Sigmoid colon (tissue), 7 donors: ENCODE measurements at regions of chr6 and their contacts with region 1.

Region 1: DNA sequence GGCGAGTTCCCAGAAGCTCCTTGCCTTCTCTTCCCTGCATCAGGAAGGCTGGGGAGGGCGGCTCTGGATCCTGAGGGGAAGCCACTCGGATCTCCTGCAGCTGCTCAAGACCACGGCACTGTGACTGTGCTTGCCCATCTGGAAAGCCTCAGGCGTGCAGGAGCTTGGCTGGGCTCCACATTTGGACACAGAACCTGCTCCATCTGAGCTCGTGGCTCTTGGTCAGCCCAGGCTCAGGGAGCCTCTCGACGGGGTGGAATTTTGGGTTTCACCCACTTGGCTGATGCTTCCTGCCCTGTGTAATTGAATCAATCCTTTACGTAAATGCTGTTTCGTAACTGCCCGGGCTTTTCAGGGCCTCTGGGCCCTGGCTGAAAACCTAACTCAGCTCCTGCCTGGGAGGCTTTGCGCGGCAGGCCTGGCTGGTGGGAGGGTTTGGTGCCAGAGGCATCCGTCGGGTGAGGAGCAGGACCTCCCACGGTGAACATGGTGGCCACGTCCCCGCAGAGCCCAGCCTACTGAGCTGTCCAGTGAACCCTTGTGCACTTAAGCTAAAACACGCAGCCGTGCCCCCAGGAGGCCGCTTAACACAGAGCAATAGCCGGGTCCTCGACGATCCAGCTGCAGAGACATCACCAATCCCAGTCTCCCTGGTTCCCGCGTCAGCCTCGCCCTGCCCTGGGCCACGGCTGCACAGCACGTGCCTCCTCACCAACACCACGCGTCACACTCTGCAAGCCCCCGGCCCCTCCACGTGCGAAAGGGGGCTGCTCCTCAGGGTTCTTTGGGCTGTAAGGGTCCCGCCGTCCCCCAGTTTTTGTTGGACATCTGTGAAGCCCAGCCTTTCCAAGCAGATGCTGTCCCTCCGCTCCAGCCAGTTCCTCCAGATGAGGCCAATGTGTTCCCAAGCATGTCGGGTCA is 241.0 kb downstream of the DLL1 start:
- DNase-seq: peak; percentile 99
- H3K4me3 ChIP-seq: no peak overlapping the region
- H3K27ac ChIP-seq: peak overlapping the region; percentile 72 to 91 (median 79)
- H3K4me1 ChIP-seq: peaks cover 0 to 52% (median 31%) of the 10 kb centered on the region in 4 donors
- H3K27me3 ChIP-seq: no peaks in the 10 kb centered on the region
- CTCF ChIP-seq: no peak
- EP300 ChIP-seq: peak; percentile 53 to 94 (median 83)
- POLR2A ChIP-seq: no peak

Region 2: DNA sequence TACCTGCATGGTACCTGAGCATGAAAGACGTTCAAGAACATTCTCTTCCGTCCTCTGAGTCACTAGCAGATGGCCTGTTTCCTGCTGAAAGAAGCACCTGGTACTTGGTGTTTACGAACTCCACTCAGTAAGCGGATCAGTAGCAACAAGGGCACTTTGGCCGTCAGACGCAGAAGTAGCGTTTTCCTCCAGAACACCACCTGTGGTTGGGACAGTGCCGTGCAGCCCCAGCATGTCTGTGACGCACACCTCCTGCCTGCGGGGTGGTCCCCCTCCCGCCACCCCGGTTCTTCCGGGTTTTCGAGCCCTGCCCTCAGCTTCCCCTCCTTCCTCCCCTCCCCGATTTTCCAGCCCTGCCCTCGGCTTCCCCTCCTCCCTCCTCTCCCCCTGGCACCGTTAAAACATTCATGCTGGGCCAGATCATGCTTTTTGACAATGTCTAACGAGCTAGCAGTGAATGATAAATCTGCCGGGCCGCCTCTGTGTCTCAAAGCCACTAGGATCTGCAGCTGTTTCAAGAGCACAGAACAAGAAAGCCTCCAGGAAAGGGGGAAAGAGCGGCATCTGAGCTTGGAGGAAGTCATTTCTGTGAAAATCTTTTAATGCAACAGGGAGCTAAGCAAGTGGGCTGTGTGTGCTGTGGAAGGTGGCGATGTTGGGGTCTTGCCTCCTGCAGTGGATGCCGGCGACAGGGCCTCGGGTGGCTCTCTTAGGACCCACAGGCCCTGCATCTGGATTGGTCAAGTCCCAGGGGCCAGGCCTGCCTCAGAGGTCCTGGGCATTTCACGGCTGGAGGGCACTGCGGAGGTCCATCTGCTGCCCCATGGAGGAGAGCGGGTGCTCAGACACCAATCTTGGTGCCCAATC is 90.5 kb before region 1 on chr6:
- intact Hi-C with region 1: loop called (anchors 5 kb)
- DNase-seq: peak; percentile 82
- H3K4me3 ChIP-seq: no peak overlapping the region
- H3K27ac ChIP-seq: no peak overlapping the region
- H3K4me1 ChIP-seq: peaks cover 0 to 15% (median 10%) of the 10 kb centered on the region in 4 donors
- H3K27me3 ChIP-seq: peaks cover 4 to 17% (median 5%) of the 10 kb centered on the region in 3 donors
- CTCF ChIP-seq: no peak
- EP300 ChIP-seq: no peak
- POLR2A ChIP-seq: no peak

Region 3: GRCh38 chr6:170030821-170031471 is 19.0 kb before region 1 on chr6:
- intact Hi-C with region 1: loop called (anchors 2 kb)
- DNase-seq: peak; percentile 87
- H3K4me3 ChIP-seq: no peak overlapping the region
- H3K27ac ChIP-seq: peak overlapping the region in 2 of 4 donors; percentile 54 to 74
- H3K4me1 ChIP-seq: peaks cover 0 to 36% (median 15%) of the 10 kb centered on the region in 4 donors
- H3K27me3 ChIP-seq: no peaks in the 10 kb centered on the region
- CTCF ChIP-seq: no peak
- EP300 ChIP-seq: no peak
- POLR2A ChIP-seq: no peak